H1 (cell line): ENCODE measurements at regions of chr16 and their contacts with region 1.

Region 1: GRCh38 chr16:66562407-66562806 is 3.8 kb upstream of the CMTM1 start:
- DNase-seq: no peak
- H3K4me3 ChIP-seq: no peak overlapping the region
- H3K27ac ChIP-seq: no peak overlapping the region
- H3K4me1 ChIP-seq: no peaks in the 10 kb centered on the region
- H3K27me3 ChIP-seq: no peaks in the 10 kb centered on the region
- CTCF ChIP-seq: no peak
- EP300 ChIP-seq: no peak
- POLR2A ChIP-seq: no peak
- RAD21 ChIP-seq: 0 out of 4 replicates have a peak, but pooled peaks of 1 of the 2 experiments have one; percentile 16

Region 2: DNA sequence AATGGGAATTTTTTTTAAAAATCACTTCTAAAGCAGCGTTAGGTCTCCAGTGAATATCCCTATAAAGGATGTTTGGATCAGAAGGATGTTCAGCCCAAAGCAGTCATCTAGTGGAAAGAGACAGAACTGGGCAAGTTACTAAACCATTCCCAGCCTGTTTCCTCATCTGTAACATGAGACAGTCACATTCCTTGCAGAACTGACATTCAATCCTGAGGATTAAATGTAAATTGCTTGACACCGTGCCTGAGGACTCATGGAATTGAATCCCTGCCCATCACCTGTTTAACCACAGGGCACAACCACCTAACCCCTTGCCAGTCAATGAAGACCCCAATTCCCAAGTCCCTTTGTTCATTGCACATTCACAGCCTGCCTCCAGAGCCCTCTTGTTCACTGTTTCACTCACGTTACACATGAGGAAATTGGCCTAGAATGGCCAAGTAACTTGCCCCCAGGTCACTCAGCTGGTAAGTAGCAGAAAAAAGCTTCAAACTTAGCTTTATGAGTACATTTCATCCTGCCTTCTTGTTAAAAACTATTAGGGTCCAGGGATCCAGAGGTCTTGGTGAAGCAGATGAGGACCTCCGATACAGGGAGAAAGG is 18.3 kb after region 1 on chr16:
- CTCF ChIA-PET with region 1: interaction called, 18 read pairs
- POLR2A ChIA-PET with region 1: interaction called, 4 read pairs
- DNase-seq: no peak
- H3K4me3 ChIP-seq: no peak overlapping the region; a peak in 1 of 8 replicates
- H3K27ac ChIP-seq: no peak overlapping the region
- H3K4me1 ChIP-seq: peaks cover 0 to 11% (median 10%) of the 10 kb centered on the region in 4 experiments
- H3K27me3 ChIP-seq: peaks cover 19 to 30% (median 27%) of the 10 kb centered on the region in 4 experiments
- CTCF ChIP-seq: no peak
- EP300 ChIP-seq: no peak
- POLR2A ChIP-seq: no peak
- RAD21 ChIP-seq: no peak